H1 (cell line): ENCODE measurements at regions of chr19 and their contacts with region 1.

Region 1: GRCh38 chr19:18251587-18252369 is 22.5 kb downstream of the IQCN start:
- DNase-seq: peak; percentile 70 to 97
- H3K4me3 ChIP-seq: no peak overlapping the region
- H3K27ac ChIP-seq: no peak overlapping the region
- H3K4me1 ChIP-seq: peaks cover 5 to 16% (median 13%) of the 10 kb centered on the region in 4 experiments
- H3K27me3 ChIP-seq: peaks cover 0 to 3% (median 0%) of the 10 kb centered on the region in 4 experiments; a peak in 3 of 7 replicates
- CTCF ChIP-seq: peak; percentile 86 to 96 (median 93)
- EP300 ChIP-seq: no peak
- POLR2A ChIP-seq: no peak
- RAD21 ChIP-seq: peak; percentile 99

Region 2: GRCh38 chr19:18117692-18118378 is 133.9 kb before region 1 on chr19:
- CTCF ChIA-PET with region 1: interaction called, 26 read pairs
- POLR2A ChIA-PET with region 1: no interaction called
- DNase-seq: peak in 1 of 2 experiments; percentile 97
- H3K4me3 ChIP-seq: peak overlapping the region; percentile 70 to 85 (median 76)
- H3K27ac ChIP-seq: peak overlapping the region; percentile 50
- H3K4me1 ChIP-seq: peaks cover 3 to 21% (median 8%) of the 10 kb centered on the region in 4 experiments
- H3K27me3 ChIP-seq: peaks cover 0 to 3% (median 1%) of the 10 kb centered on the region in 4 experiments; a peak in 1 of 7 replicates
- CTCF ChIP-seq: no peak
- EP300 ChIP-seq: no peak
- POLR2A ChIP-seq: peak in 1 of 2 experiments; percentile 74; a peak in 2 of 3 replicates
- RAD21 ChIP-seq: no peak; a peak in 1 of 4 replicates

Region 3: DNA sequence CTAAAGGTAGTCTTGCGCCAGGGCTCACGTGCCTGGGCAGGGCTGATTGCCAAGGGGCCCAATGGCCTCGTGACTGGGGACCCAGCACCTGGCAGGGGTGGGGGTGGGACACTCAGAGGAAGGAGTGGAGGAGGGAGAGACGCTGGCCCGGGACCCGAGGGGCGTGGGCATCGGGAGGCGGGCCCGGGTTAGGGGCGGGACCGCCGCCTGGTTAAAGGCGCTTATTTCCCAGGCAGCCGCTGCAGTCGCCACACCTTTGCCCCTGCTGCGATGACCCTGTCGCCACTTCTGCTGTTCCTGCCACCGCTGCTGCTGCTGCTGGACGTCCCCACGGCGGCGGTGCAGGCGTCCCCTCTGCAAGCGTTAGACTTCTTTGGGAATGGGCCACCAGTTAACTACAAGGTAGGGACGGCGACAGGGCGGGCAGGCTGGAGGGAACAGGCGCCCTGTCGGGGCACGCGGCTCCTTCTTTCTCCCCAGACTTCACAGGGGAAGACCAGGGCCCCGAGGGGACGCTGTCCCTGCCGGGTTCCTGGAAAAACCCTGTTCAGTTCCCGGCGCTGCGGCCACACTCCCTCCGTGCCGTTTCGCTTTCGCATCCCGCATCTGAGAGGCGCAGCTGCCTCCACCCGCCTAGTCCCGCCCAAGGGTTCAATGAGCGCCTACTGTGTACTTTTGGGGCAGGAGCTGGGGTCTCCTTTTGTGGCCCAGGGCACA is 78.0 kb before region 1 on chr19 and contains the start of gene IFI30:
- CTCF ChIA-PET with region 1: interaction called, 21 read pairs
- POLR2A ChIA-PET with region 1: interaction called, 3 read pairs
- DNase-seq: peak in 1 of 2 experiments; percentile 84
- H3K4me3 ChIP-seq: peak within 1 kb of the TSS; percentile 44 to 81 (median 66)
- H3K27ac ChIP-seq: no peak within 1 kb of the TSS
- H3K4me1 ChIP-seq: peaks cover 0 to 5% (median 2%) of the 10 kb centered on the region in 4 experiments; a peak in 2 of 7 replicates
- H3K27me3 ChIP-seq: peaks cover 0 to 17% (median 7%) of the 10 kb centered on the region in 4 experiments; a peak in 5 of 7 replicates
- CTCF ChIP-seq: no peak
- EP300 ChIP-seq: no peak
- POLR2A ChIP-seq: no peak; a peak in 1 of 3 replicates
- RAD21 ChIP-seq: no peak
- total RNA-seq, gene IFI30: 25.9 and 28.9 TPM in 2 replicates

Region 4: DNA sequence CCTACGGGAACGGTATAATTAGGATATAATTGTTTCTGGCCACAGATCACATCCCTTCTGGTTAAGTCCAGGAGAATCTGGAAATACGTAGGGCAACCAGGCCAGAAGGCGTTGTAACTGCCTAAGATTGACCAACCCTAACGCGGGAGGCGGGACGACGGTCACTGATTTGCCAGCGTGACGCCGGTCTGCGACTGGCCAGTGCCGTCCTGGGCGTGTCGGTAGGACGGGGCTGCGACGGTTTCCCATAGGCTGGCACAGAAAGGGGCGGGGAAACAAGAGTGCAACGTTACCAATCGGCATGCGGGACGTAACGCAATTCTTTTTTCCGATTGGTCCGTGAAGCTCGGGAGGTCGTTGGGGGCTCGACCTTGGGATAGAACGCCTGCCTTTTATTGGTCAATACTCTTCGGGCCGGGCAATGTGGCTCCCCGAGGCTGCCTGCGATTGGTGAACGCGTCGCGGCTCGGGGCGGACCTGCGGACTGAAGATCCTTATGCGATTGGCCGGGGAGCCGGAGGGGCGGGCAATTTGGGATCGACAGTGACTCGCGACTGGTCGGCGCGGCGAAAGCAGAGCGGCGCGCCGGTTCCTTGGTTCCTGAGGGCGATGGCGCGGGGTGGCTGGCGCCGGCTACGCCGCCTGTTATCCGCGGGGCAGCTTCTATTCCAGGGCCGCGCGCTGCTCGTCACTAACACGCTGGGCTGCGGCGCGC is 58.9 kb before region 1 on chr19 and contains the start of gene MPV17L2:
- CTCF ChIA-PET with region 1: interaction called, 16 read pairs
- POLR2A ChIA-PET with region 1: interaction called, 6 read pairs
- DNase-seq: peak; percentile 95 to 99
- H3K4me3 ChIP-seq: peak within 1 kb of the TSS; percentile 82 to 96 (median 89)
- H3K27ac ChIP-seq: peak within 1 kb of the TSS; percentile 60
- H3K4me1 ChIP-seq: peaks cover 5 to 12% (median 8%) of the 10 kb centered on the region in 4 experiments
- H3K27me3 ChIP-seq: no peaks in the 10 kb centered on the region
- CTCF ChIP-seq: no peak
- EP300 ChIP-seq: no peak
- POLR2A ChIP-seq: peak in 1 of 2 experiments; percentile 69; a peak in 2 of 3 replicates
- RAD21 ChIP-seq: no peak
- total RNA-seq, gene MPV17L2: 24.2 and 28.6 TPM in 2 replicates

Region 5: GRCh38 chr19:18224525-18225354 is 27.0 kb before region 1 on chr19:
- CTCF ChIA-PET with region 1: interaction called, 140 read pairs
- POLR2A ChIA-PET with region 1: interaction called, 5 read pairs
- DNase-seq: peak; percentile 99
- H3K4me3 ChIP-seq: peak overlapping the region; percentile 54 to 77 (median 68)
- H3K27ac ChIP-seq: peak overlapping the region; percentile 89
- H3K4me1 ChIP-seq: peaks cover 0 to 20% (median 16%) of the 10 kb centered on the region in 4 experiments; a peak in 6 of 7 replicates
- H3K27me3 ChIP-seq: peaks cover 10 to 23% (median 17%) of the 10 kb centered on the region in 4 experiments
- CTCF ChIP-seq: no peak
- EP300 ChIP-seq: no peak
- POLR2A ChIP-seq: no peak
- RAD21 ChIP-seq: no peak

Region 6: DNA sequence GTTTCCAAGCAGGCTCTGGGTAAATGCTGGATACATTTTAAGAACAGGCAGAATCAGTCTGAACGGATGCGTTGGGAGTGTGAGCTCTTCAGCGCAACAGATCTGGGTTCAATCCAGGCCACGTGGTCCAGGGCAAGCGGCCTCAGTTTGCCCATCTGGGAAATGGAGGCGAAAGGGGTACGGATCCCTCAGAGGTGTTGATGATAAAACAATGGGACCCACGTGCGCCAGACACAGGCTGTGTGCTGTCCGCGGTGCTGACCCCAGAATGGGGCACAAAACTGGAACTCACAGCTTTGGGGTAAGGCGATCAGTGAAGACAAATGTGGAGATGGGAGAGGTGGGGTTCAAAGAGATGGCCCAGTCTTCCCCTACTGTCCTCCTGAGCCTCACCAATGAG is 12.5 kb before region 1 on chr19:
- CTCF ChIA-PET with region 1: interaction called, 140 read pairs
- POLR2A ChIA-PET with region 1: interaction called, 4 read pairs
- DNase-seq: peak in 1 of 2 experiments; percentile 74
- H3K4me3 ChIP-seq: no peak overlapping the region
- H3K27ac ChIP-seq: no peak overlapping the region
- H3K4me1 ChIP-seq: no peaks in the 10 kb centered on the region
- H3K27me3 ChIP-seq: no peaks in the 10 kb centered on the region; a peak in 1 of 7 replicates
- CTCF ChIP-seq: no peak
- EP300 ChIP-seq: no peak
- POLR2A ChIP-seq: no peak
- RAD21 ChIP-seq: no peak

Region 7: GRCh38 chr19:18328340-18329034 is 76.7 kb after region 1 on chr19:
- CTCF ChIA-PET with region 1: interaction called, 24 read pairs
- POLR2A ChIA-PET with region 1: interaction called, 4 read pairs
- DNase-seq: peak; percentile 87
- H3K4me3 ChIP-seq: peak overlapping the region; percentile 28 to 53 (median 38); a peak in 6 of 8 replicates
- H3K27ac ChIP-seq: no peak overlapping the region; the same call in 1 of the 2 replicates
- H3K4me1 ChIP-seq: peaks cover 0 to 7% (median 4%) of the 10 kb centered on the region in 4 experiments; a peak in 5 of 7 replicates
- H3K27me3 ChIP-seq: no peaks in the 10 kb centered on the region
- CTCF ChIP-seq: peak; percentile 45 to 82 (median 69)
- EP300 ChIP-seq: no peak
- POLR2A ChIP-seq: 0 out of 3 replicates have a peak, but pooled peaks of 1 of the 2 experiments have one; percentile 49
- RAD21 ChIP-seq: peak; percentile 60 to 72

Region 8: DNA sequence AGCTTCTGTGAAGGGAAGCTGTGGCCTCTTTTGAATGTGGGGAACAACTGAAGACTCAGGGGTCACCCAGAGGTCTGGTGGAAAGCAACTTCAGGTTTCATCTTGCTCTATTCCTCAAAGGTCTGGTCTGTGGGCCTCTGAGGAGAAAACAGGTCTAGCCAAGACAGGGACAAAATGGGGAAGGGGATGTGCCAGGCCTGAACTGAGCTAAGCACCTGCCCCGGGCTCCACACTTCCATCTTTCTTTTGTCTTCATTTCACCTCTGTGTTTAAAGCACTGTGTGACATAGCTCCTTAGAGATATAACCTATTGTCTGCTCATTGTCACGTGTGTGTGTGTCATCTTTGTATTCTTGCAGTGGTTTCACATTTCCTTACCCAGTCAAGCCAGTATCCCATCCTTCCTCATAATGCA is 114.2 kb after region 1 on chr19:
- CTCF ChIA-PET with region 1: no interaction called
- POLR2A ChIA-PET with region 1: no interaction called
- DNase-seq: no peak
- H3K4me3 ChIP-seq: no peak overlapping the region
- H3K27ac ChIP-seq: no peak overlapping the region
- H3K4me1 ChIP-seq: peaks cover 1 to 14% (median 8%) of the 10 kb centered on the region in 4 experiments; a peak in 5 of 7 replicates
- H3K27me3 ChIP-seq: no peaks in the 10 kb centered on the region
- CTCF ChIP-seq: no peak
- EP300 ChIP-seq: no peak
- POLR2A ChIP-seq: no peak
- RAD21 ChIP-seq: no peak